Right cardiac atrium (tissue), 5 donors: ENCODE measurements at regions of chr17 and their contacts with region 1.

Region 1: DNA sequence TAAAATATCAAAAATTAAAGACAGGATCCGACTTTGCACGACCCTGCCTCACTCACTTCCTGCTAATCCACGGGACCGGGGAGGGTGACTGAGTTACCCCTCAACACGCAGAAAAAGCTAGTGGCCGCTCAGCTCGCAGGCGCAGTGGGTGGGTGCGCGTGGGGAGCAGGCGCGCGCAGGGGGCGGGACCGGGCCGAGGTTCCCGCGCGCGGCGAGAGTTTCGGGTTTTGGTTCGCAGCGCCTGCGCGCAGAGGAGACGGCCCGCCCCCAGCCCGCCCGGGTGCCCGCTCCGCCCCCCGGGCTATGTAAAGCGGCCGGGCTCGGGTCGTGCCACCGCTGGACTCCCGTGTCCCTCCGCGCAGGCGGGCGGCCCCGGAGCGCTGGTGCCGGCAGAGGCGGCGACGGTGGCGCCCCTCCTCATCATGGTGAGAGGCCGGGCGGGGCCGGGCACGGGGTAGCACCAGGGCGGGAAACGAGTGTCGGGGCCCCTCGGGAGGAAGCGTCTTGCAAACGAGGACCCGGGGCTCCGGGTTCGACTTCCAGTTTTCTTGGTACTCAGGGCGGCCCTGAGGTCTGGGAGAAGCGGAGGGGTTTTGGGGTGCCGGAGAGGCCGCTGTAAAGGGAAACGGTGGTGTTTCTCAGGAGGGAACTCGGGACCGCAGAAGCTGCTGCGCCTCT is at the start of gene CNP:
- DNase-seq: peak; percentile 93 to 98 (median 97)
- ATAC-seq: peak; percentile 95 to 96
- H3K4me3 ChIP-seq: peak within 1 kb of the TSS; percentile 90
- H3K27ac ChIP-seq: peak within 1 kb of the TSS; percentile 85
- H3K4me1 ChIP-seq: peaks cover 9% of the 10 kb centered on the region
- H3K27me3 ChIP-seq: no peaks in the 10 kb centered on the region
- total RNA-seq, gene CNP: 37.1 to 41.1 (median 39.2) TPM

Region 2: GRCh38 chr17:42010898-42011516 is 44.4 kb after region 1 on chr17:
- intact Hi-C with region 1: loop called in 2 of 4 experiments (anchors 5 kb)
- DNase-seq: no peak
- ATAC-seq: no peak
- H3K4me3 ChIP-seq: no peak overlapping the region
- H3K27ac ChIP-seq: no peak overlapping the region
- H3K4me1 ChIP-seq: peaks cover 7% of the 10 kb centered on the region
- H3K27me3 ChIP-seq: no peaks in the 10 kb centered on the region

Region 3: GRCh38 chr17:42019509-42020404 is 53.2 kb after region 1 on chr17 and contains the start of gene NKIRAS2:
- intact Hi-C with region 1: loop called in 3 of 4 experiments (anchors 5 to 10 kb)
- DNase-seq: peak; percentile 96 to 98 (median 98)
- ATAC-seq: peak; percentile 80 to 85
- H3K4me3 ChIP-seq: peak within 1 kb of the TSS; percentile 83
- H3K27ac ChIP-seq: peak within 1 kb of the TSS; percentile 49
- H3K4me1 ChIP-seq: no peaks in the 10 kb centered on the region
- H3K27me3 ChIP-seq: no peaks in the 10 kb centered on the region
- total RNA-seq, gene NKIRAS2: 39.1 to 47.9 (median 40.4) TPM

Region 4: GRCh38 chr17:42101513-42102319 is 135.1 kb after region 1 on chr17:
- intact Hi-C with region 1: loop called in 2 of 4 experiments (anchors 5 kb)
- DNase-seq: peak; percentile 80 to 93 (median 93)
- ATAC-seq: peak; percentile 77 to 83
- H3K4me3 ChIP-seq: no peak overlapping the region
- H3K27ac ChIP-seq: no peak overlapping the region
- H3K4me1 ChIP-seq: no peaks in the 10 kb centered on the region
- H3K27me3 ChIP-seq: no peaks in the 10 kb centered on the region